ENCODE measurements at regions of chr11 and their contacts with region 1.

Region 1: GRCh38 chr11:11787305-11788062 is 54.3 kb upstream of the USP47 start:
- DNase-seq: no peak
- ATAC-seq: peak; percentile 90

Region 2: GRCh38 chr11:10933455-10934292 is 853.8 kb before region 1 on chr11:
- intact Hi-C with region 1: loop called (anchors 5 kb)
- DNase-seq: peak; percentile 92
- ATAC-seq: peak; percentile 85

Region 3: DNA sequence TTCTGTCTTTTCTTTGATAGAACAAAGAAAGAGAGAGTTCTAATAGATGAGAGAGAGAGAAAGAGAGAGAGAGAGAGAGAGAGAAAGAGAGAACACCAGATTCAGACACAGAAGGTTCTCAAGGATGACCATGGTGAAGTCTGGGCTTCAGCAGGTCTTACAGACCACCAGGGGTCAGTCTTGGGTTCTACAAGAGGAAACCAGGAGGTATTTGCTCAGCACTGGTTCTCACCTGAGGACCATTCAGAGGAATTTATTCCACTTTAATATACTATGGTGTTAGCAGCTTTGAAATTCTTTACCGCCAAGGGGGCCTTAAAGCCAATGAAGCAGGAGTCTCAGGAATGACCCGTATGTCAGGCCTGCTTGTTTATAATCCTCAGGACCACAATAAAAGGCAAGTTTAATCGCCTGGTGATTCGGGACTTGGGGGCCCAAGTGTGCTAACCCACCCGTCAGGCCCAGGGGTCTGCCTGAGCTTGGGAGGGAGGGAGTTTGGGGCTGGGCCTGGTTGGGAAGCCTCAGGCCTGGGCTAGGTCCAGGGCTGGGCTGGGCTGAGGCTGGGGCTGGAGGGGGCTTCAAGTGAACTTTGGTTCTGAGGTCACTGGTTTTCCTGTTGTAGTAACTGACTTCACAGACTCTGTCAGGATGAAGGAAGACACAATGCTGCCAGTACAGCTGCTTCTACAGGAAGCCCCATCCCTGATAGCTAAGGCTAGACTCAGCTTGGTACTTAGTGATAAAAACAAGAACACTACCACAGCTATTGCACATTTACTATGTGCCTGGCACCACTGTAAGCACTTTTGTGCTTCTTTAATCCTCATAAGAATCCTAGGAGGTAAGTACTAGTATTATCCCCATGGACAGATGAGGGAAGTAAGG is 750.4 kb before region 1 on chr11:
- intact Hi-C with region 1: loop called (anchors 1 kb)
- DNase-seq: no peak
- ATAC-seq: peak; percentile 52

Region 4: DNA sequence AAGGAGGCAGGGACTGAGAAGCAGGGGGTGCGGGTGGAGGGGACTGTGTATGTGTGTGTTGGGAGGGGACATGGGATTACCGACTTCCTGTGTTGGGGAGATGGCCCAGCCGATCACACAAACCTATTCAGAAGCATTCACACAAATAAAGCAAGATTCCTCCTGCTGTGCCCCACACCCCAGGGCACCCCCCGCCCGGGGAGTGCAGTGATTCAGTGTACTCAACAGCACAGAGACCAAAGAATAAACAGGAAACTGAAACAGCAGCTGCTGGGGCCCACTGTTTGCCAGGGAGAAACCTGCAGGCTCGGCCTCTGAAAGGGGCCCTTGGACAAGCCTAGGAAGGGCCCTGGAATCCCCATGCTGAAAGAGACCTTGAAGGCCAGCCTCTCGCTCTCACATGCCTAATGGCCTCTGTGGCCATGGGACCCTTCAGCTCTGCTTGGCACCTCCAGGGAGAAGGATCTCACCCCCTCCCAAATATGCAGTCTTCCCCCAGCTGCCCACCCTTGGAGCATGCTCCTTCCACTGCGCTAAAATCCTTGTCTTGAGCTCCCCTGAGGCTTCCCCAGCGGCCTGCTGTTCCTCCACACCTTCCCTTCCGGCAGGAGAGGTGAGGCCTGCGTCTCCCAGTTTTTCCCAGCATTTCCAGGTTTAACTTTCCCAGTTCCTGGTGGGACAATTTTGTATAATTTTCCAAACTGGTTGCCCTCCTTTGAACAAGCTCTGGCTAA is 507.4 kb before region 1 on chr11:
- intact Hi-C with region 1: no loop called
- DNase-seq: no peak
- ATAC-seq: no peak

Region 5: GRCh38 chr11:11400635-11401232 is 386.8 kb before region 1 on chr11:
- intact Hi-C with region 1: loop called (anchors 5 kb)
- DNase-seq: no peak
- ATAC-seq: no peak

Region 6: GRCh38 chr11:11621573-11622319 is 165.7 kb before region 1 on chr11 and contains the start of gene GALNT18:
- intact Hi-C with region 1: loop called (anchors 5 kb)
- DNase-seq: peak; percentile 93
- ATAC-seq: peak; percentile 98
- total RNA-seq, gene GALNT18: 22.9 TPM

Region 7: GRCh38 chr11:12592283-12592682 is 804.8 kb after region 1 on chr11:
- intact Hi-C with region 1: no loop called
- DNase-seq: no peak
- ATAC-seq: no peak